ENCODE measurements at regions of chr4 and their contacts with region 1.

Region 1: GRCh38 chr4:94621491-94622080 is 136.2 kb upstream of the BMPR1B start:
- DNase-seq: no peak
- H3K4me3 Mint-ChIP-seq: no peak overlapping the region
- H3K27ac Mint-ChIP-seq: no peak overlapping the region
- H3K4me1 Mint-ChIP-seq: no peaks in the 10 kb centered on the region
- H3K27me3 Mint-ChIP-seq: no peaks in the 10 kb centered on the region

Region 2: GRCh38 chr4:94171616-94172015 is 450.0 kb before region 1 on chr4:
- intact Hi-C with region 1: no loop called
- DNase-seq: no peak
- H3K4me3 Mint-ChIP-seq: no peak overlapping the region
- H3K27ac Mint-ChIP-seq: no peak overlapping the region
- H3K4me1 Mint-ChIP-seq: no peaks in the 10 kb centered on the region
- H3K27me3 Mint-ChIP-seq: peaks cover 5% of the 10 kb centered on the region

Region 3: GRCh38 chr4:94669672-94670664 is 48.4 kb after region 1 on chr4:
- intact Hi-C with region 1: no loop called
- DNase-seq: no peak
- H3K4me3 Mint-ChIP-seq: no peak overlapping the region
- H3K27ac Mint-ChIP-seq: no peak overlapping the region
- H3K4me1 Mint-ChIP-seq: no peaks in the 10 kb centered on the region
- H3K27me3 Mint-ChIP-seq: peaks cover 4% of the 10 kb centered on the region

Region 4: GRCh38 chr4:95095348-95095974 is 473.9 kb after region 1 on chr4:
- intact Hi-C with region 1: loop called (anchors 10 kb)
- DNase-seq: no peak
- H3K4me3 Mint-ChIP-seq: no peak overlapping the region
- H3K27ac Mint-ChIP-seq: no peak overlapping the region
- H3K4me1 Mint-ChIP-seq: no peaks in the 10 kb centered on the region
- H3K27me3 Mint-ChIP-seq: peaks cover 7% of the 10 kb centered on the region

Region 5: DNA sequence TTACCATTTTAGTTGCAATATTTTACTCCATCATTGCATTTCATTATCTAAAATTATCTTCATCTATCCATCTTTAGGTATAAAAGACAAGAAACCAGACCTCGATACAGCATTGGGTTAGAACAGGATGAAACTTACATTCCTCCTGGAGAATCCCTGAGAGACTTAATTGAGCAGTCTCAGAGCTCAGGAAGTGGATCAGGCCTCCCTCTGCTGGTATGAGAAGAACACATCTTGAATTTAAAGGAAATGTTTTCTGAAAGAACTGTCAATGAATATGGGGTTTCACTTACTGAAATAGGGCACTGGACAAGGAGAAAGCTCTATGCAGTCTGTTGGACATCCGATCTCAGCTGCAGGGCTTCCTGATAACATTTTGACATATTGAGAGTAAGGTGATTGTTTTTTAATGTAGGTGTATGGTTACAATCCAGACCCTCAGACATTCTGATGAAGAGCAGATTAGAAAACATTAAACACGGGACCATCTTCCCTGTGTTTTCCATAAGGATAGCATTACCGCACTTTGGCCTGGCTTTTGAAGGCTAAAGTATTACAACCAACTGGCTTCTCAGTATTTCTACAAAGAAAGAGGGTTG is 503.4 kb after region 1 on chr4:
- intact Hi-C with region 1: loop called (anchors 2 kb)
- DNase-seq: no peak
- H3K4me3 Mint-ChIP-seq: no peak overlapping the region
- H3K27ac Mint-ChIP-seq: no peak overlapping the region
- H3K4me1 Mint-ChIP-seq: peaks cover 6% of the 10 kb centered on the region
- H3K27me3 Mint-ChIP-seq: peaks cover 5% of the 10 kb centered on the region

Measured in activated T-helper 1 cell treated with anti-CD3 and anti-CD28 coated beads, Interleukin-12 subunit alpha, Interleukin-12 subunit beta, Interleukin-2, Interleukin-4 antibody, amounts not matched to agents 30 ng/mL and 10 ng/mL and 1 ng/mL, durations not matched to agents 14 hours and 24 hours and 36 hours (primary cell).